Dorsolateral prefrontal cortex (tissue), 120 donors: ENCODE measurements at regions of chr3 and their contacts with region 1.

Region 1: GRCh38 chr3:64462203-64462602 is 225.6 kb downstream of the ADAMTS9 start:
- DNase-seq: no peak
- H3K4me3 ChIP-seq: no peak overlapping the region
- H3K27ac ChIP-seq: no peak overlapping the region
- H3K27me3 ChIP-seq: peaks cover 0 to 9% (median 0%) of the 10 kb centered on the region in 45 donors
- CTCF ChIP-seq: no peak

Region 2: DNA sequence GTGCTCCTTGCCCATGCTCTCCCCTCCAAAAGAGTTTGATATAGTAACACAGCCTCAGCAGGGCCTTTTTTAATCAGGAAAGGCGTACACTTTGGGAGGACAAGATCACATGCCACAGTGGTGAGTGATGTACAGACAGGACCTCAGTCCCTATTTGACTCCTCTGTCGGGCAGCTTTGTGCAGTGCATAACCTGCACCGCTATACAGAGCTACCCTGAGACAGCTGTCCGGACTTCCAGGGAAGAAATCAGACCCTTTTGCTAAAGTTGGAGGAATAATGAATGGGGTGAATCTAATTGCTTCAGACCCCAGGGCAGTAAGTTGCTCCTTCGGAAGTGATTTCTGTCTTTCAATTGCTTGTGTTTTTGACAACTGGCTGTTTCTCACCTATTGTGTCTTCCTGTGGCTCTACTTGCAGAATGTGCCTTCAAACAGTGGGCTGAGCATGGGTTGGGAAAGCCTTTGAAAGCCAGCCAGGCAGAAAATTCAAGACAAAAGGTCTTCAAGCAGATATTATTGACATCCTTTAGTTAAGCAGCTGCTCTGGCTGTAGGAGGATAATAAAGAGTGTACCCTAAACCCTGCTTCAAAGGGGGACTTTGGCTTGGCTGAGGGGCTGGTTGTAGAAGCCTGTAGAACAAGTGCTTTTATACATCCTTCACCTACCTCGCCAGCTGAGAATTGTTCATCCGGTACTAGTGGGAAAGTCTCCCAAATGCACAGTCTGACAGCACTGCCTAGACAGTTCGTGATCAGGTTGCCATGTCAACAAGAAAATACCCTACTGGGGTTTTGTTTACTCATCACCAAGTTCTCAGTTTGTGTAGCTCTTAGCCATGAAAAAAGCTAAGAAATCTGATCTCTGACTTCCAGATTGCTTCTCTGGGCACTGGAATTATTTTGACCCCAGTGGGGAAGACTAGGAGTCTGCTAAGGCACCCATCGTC is 774.7 kb before region 1 on chr3:
- intact Hi-C with region 1: no loop called
- DNase-seq: no peak
- H3K4me3 ChIP-seq: no peak overlapping the region
- H3K27ac ChIP-seq: no peak overlapping the region
- H3K27me3 ChIP-seq: no peaks in the 10 kb centered on the region
- CTCF ChIP-seq: no peak

Region 3: GRCh38 chr3:64023187-64023848 is 438.9 kb before region 1 on chr3 and contains the start of gene PSMD6:
- intact Hi-C with region 1: loop called in 1 of 2 experiments (anchors 5 kb)
- DNase-seq: peak; percentile 72 to 91 (median 84)
- H3K4me3 ChIP-seq: peak within 1 kb of the TSS; percentile 75 to 99 (median 94)
- H3K27ac ChIP-seq: peak within 1 kb of the TSS in 56 of 59 donors; percentile 33 to 95 (median 80)
- H3K27me3 ChIP-seq: no peaks in the 10 kb centered on the region
- CTCF ChIP-seq: peak in 55 of 56 donors; percentile 98 to 100 (median 100)
- total RNA-seq, gene PSMD6: 44.2 to 84.4 (median 65.1) TPM